ENCODE measurements at regions of chr5 and their contacts with region 1.

Region 1: DNA sequence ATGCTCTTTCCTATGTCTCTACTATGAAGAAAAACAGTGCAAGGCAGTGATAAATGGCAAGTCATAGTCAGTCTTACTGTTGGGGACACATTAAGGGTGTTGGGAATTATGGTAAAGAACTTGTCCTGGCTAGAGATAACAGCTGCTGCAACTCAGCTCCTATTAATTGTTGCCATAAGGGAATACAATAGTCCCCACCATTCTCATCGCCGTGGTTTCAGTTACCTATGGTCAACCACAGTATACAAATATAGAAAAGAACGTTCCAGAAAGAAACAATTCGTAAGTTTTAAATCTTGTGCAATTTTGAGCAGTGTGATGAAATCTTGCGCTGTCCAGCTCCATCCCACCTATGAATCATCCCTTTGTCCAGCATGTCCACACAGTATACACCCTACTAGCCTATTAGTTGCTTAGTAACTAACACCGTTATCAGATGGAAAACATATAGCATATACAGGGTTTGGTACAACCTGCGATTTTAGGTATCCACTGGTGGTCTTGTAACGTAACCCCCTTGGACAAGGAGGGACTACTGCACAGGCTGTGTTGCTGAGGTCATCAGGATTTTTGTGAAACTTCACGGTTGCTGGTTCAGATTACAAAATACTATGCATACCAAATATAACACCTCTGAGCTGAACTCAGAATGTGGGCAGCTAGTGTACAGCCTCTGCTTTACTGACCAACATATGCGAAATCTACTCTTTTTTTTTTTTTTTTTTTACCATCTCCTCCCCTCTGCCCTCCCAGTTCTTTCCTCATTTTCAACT is 53.5 kb downstream of the ZFR start:
- DNase-seq: no peak
- ATAC-seq: peak in 3 of 8 donors; percentile 42 to 85 (median 57)
- H3K4me3 ChIP-seq: no peak overlapping the region
- H3K27ac ChIP-seq: no peak overlapping the region
- H3K4me1 ChIP-seq: peaks cover 0 to 22% (median 0%) of the 10 kb centered on the region in 9 donors
- H3K27me3 ChIP-seq: no peaks in the 10 kb centered on the region
- CTCF ChIP-seq: no peak

Region 2: DNA sequence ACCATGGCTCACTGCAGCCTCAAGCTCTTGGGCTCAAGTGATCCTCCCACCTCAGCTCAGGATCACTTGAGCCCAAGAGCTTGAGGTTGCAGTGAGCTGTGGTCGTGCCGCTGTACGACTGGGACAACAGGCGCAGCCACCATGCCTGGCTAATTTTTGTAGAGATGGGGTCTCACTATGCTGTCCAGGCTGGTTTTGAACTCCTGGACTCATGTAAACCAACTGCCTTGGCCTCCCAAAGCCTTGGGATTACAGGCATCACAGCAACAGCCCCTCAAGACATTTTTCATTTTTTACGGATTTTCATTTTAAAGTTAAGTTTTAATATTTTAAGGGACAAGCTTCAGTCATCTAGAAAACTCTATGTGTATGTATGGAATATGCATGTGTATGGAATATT is 25.4 kb before region 1 on chr5:
- intact Hi-C with region 1: loop called in 1 of 10 experiments (anchors 2 kb)
- DNase-seq: no peak
- ATAC-seq: no peak
- H3K4me3 ChIP-seq: no peak overlapping the region
- H3K27ac ChIP-seq: no peak overlapping the region
- H3K4me1 ChIP-seq: no peaks in the 10 kb centered on the region
- H3K27me3 ChIP-seq: no peaks in the 10 kb centered on the region
- CTCF ChIP-seq: no peak

Measured in heart right ventricle (tissue), 16 donors.